ENCODE measurements at regions of chr9 and their contacts with region 1.

Region 1: DNA sequence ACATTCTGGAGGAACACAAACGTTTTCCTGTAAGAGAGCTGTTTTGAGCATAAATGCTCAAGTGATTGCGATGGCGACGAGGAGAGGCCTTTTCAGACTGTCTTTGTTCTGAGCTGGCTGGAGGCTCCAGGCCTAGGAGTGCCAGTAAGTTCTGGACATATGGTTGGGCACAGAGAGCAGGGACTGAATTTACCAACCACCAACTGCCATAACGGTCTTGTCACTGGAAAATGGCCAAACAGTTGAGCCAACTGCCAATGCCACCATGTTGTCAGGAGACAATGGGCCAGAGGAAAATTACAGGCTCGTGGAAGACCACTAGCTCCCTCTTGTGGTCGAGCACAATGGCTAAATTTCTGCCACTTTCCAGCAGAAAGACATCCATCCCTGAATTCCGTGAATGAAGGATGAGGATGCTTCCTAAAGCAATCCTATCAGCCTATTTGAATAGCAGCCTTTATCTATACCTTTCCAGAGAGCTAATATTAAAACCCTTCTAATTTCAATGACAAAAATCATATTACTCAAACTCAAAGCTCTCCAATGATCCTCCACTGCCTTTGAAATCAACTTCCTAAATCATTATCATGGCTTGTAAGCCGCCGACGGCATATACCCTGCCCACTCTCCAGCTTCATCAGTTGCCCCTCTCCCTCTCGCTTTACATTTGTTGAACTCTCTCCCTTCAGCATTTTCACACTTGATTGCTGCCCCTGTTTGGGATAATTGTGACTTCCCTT is 66.9 kb upstream of the GLIS3 start:
- DNase-seq: peak; percentile 34
- CTCF ChIP-seq: peak; percentile 64

Region 2: DNA sequence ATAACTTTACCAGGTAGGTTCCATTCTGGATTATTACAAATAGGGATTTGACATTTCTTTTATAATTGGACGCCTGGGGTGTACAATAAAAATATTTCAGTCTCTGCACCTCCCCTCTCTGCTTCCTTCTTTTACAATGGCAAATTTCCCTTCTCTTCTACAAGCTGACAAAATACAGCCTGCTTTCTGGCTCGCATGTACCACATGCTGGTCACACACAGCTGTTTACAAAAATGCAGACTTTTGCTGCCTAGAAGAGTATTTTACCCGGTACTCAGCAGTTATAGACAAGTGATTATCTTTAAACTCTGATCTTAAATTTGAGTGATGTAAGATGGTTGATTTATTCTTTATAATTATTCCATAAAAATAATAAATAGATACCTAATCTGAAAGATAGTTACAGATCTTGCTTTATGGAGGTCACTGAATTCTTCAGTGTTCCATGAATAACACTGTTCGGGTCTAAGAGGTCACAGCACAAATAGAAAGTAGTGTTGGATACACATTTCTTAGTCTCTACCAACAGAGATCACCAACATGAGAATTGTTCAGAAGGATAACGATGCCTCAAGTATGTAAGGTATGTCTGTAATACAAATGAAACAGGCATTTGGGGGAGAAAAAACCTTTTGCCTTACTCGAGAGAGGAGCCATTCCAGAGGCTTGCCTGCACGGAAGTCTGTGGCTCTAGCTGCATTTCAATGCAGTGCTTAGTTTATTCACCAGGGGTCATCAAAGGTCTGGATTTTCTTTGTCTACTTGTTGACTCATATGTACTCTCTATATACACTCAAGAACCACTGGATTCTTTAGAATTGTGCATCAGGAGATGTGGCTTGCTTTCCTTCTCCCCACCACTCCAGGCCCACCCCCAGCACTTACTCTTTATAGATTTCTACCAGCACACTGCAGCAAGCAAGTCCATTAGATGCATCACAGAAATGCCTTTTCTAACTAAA is 634.4 kb before region 1 on chr9:
- CTCF ChIA-PET with region 1: interaction called, 14 read pairs
- POLR2A ChIA-PET with region 1: no interaction called
- DNase-seq: peak; percentile 68
- CTCF ChIP-seq: peak; percentile 39

Region 3: DNA sequence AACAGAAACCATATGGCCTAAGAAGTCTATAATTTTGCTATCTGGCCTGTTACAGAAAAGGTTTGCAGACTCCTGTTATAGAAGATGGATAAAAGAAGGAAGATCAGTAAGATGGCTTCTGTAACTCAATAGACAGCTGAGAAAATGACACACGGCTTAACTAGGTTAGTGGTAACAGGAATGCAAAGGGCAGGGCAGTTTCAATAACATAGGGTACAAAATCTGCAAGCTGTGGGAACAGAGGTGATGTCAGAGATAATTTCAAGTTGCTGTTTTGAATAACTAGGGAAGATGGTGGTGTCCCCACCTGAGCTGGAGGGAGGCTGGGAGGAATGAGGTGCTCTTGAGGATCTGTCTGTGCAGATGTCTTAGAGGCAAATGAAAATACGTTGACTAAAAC is 173.4 kb before region 1 on chr9:
- CTCF ChIA-PET with region 1: no interaction called
- POLR2A ChIA-PET with region 1: no interaction called
- DNase-seq: no peak
- CTCF ChIP-seq: no peak

Region 4: DNA sequence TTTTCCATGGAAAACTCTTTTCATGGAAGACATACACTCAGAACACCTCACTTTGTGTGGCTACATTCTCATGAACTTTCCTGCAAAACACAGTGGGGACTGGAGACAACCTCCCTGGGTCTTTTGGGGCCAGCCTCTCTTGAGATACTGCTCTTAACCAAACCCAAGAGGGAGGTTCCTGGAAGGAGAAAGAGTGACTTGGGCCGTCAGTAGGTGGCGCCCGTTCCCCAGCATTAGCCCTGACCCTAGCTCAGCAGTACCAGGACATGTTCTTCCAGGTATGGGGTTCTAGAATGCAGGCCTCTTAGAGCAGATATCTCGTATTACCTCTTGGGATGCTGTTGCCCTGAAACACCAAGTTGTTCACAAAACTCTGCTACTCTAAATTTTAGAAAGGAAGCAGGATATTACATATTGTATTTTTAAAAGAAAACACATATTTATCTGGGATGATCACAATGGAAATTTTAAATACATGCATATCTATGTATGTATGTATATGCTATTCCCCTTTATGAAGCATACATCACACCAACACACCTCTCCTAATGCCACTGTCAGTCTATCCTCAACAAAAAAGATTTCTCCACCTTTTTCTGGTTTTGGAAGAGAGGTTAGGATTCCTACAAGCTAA is 51.1 kb before region 1 on chr9:
- CTCF ChIA-PET with region 1: interaction called, 55 read pairs
- POLR2A ChIA-PET with region 1: no interaction called
- DNase-seq: peak; percentile 75
- CTCF ChIP-seq: peak; percentile 84

Region 5: DNA sequence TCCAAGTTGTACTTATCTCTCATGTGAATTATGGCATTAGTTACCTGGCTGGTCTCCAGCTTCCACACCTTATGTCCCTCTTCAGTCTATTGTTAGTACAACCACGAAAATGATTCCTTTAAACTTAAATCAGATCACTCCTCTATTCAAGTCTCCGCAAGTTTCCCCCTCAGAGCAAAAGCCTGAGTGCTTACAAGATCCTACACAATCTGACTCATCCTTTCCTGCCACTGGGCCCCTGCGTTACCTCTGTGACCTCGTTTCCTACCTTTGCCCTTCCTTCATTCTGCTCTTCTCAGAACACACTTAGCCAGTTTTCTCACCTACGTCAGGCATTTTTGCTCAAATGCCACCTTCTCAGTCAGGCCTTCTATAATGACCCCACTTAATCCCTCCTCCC is 21.8 kb before region 1 on chr9:
- CTCF ChIA-PET with region 1: interaction called, 26 read pairs
- POLR2A ChIA-PET with region 1: no interaction called
- DNase-seq: no peak
- CTCF ChIP-seq: no peak

Region 6: DNA sequence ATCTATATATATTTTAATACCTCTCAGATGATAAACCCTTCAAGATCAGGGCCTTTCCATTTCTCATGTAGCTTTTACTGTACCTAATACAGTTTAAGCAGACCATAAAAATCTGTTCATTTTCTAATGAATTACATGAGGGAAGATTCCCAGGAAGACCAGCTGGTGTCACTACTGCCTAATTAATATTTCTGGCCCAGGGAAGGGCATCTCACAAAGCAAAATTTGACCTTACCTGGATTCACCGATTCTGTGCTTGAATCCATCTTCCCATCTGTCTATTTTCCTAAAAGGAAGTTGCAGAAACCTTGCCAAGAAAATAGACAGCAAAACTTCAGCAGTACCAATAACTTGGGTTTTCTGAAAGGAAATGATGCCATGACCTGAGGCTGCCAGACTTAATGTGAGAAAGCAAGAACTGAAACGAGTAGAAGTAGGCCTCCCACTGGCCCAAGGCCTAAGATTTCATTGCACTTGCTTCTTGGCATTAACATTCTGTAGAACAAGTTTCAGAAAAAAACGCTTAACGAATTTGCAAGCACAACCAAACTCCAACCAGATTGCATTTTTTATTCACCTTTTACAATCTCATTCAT is 16.1 kb after region 1 on chr9:
- CTCF ChIA-PET with region 1: interaction called, 10 read pairs
- POLR2A ChIA-PET with region 1: no interaction called
- DNase-seq: peak; percentile 25
- CTCF ChIP-seq: peak; percentile 50